Activated CD4-positive, alpha-beta T cell treated with anti-CD3 and anti-CD28 coated beads, Interleukin-2, amount 10 ng/mL, durations not matched to agents 7 days and 5 days (primary cell): ENCODE measurements at regions of chr6 and their contacts with region 1.

Region 1: DNA sequence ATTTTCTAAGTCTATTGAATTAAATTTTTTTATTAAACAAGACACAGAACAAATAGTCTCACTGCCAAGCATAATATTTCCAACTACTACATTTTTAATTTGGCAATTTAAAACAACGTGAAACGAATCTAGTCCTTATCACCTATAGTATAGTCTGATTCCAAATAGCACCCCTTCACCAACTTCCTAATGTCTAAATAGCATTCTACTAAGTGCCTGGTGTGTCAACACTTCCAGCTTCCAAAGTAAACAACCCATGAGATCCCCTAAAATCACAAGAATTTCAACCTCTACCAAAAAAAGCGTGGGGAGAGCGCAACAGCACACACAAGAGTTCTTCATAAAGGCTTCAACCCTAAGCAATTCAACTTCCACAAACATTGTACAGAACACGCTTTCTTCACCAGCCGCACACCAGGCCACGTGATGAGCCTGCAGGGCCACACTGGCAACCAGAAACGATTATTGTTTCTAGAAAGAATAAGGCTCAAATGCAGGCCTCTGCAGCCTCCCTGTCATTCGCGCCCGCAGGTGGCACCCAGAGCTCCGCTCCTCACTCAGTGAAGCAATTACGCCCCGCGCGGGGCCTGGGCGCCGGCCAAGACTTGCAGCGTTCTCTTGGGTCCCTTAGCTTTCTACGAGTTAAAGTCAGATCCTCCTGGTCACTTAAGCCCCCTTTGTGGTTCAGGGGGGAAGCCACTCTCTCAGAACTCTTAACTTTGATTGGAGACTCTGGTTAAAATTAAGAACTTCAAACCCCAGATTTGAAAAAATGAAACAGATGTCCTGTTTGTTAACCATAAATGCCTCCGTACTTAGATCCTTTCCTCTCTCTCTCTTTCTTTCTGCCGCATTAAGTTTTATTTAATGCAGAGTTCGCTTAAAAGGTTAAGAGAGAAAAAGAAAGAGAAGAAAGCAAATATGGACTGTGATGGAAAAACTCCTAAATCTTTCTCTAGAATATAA is 18.3 kb downstream of the SIM1 start:
- DNase-seq: no peak
- H3K4me3 Mint-ChIP-seq: no peak overlapping the region
- H3K27ac Mint-ChIP-seq: no peak overlapping the region
- H3K4me1 Mint-ChIP-seq: peaks cover 2% of the 10 kb centered on the region
- H3K27me3 Mint-ChIP-seq: peaks cover 66% of the 10 kb centered on the region

Region 2: DNA sequence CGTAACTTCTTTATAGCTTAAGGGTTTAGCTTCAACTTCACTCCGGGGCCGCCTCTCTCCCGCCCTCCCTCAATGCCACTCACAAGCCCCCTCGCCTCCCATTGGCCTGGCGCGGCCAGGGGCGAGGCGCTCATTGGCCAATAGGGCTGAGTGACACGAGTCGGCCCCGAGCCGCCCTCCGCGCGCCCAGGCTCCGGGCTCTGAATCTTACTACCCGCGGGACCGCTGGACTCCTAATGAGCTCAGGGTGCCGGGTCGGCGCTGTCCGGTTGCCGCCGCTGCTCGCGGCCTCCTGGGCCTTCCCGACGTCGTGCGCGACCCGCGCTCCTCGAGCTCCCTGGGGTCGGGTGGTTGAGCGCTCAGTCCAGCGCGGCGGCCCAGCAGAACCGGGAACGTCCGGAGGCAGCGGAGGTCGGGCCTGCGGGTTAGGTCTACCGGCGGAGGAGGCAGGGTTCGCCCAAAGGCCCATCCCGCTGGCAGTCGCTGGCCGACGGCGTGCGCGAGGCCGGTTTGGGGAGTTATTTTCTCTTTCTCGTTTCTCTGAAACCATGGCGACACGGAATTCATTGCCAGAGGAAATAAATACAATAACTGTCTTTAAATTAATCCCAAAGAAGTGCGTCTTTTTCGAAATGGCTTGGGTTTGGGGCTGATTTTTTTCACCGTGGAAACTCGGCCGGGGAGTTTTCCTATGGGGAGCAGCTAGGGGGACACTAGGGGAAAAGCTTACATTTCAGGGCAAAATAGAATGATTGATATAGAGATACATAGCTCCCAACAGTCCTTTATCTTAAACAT is 18.7 kb after region 1 on chr6 and contains the start of gene SIM1:
- CTCF ChIA-PET with region 1: interaction called, 20 read pairs
- POLR2A ChIA-PET with region 1: no interaction called
- DNase-seq: no peak
- H3K4me3 Mint-ChIP-seq: peak within 1 kb of the TSS; percentile 47
- H3K27ac Mint-ChIP-seq: peak within 1 kb of the TSS; percentile 80
- H3K4me1 Mint-ChIP-seq: peaks cover 20% of the 10 kb centered on the region
- H3K27me3 Mint-ChIP-seq: peaks cover 86% of the 10 kb centered on the region
- total RNA-seq, gene SIM1: not detected